ENCODE measurements at regions of chr7 and their contacts with region 1.

Region 1: GRCh38 chr7:38215735-38216670 is 38.0 kb downstream of the STARD3NL start:
- DNase-seq: peak; percentile 55 to 92 (median 78)
- ATAC-seq: peak; percentile 80
- H3K4me3 ChIP-seq: peak overlapping the region in 1 of 2 experiments; percentile 31
- H3K4me3 Mint-ChIP-seq: peak overlapping the region; percentile 19
- H3K27ac ChIP-seq: peak overlapping the region in 1 of 2 experiments; percentile 85
- H3K27ac Mint-ChIP-seq: peak overlapping the region; percentile 93
- H3K4me1 ChIP-seq: peaks cover 21% of the 10 kb centered on the region
- H3K4me1 Mint-ChIP-seq: peaks cover 47% of the 10 kb centered on the region
- H3K27me3 ChIP-seq: no peaks in the 10 kb centered on the region
- H3K27me3 Mint-ChIP-seq: no peaks in the 10 kb centered on the region
- CTCF ChIP-seq: peak; percentile 97

Region 2: GRCh38 chr7:38178004-38178694 is 37.9 kb before region 1 on chr7 and contains the start of gene STARD3NL:
- CTCF ChIA-PET with region 1: interaction called, 22 read pairs
- POLR2A ChIA-PET with region 1: no interaction called
- intact Hi-C with region 1: loop called in 1 of 2 experiments (anchors 2 kb)
- DNase-seq: peak; percentile 64 to 100 (median 87)
- ATAC-seq: peak; percentile 94
- H3K4me3 ChIP-seq: peak within 1 kb of the TSS; percentile 72 to 93
- H3K4me3 Mint-ChIP-seq: peak within 1 kb of the TSS; percentile 96
- H3K27ac ChIP-seq: peak within 1 kb of the TSS; percentile 78 to 93
- H3K27ac Mint-ChIP-seq: peak within 1 kb of the TSS; percentile 96
- H3K4me1 ChIP-seq: peaks cover 24% of the 10 kb centered on the region
- H3K4me1 Mint-ChIP-seq: peaks cover 38% of the 10 kb centered on the region
- H3K27me3 ChIP-seq: no peaks in the 10 kb centered on the region
- H3K27me3 Mint-ChIP-seq: peaks cover 11% of the 10 kb centered on the region
- CTCF ChIP-seq: no peak
- total RNA-seq, gene STARD3NL: 22.4 to 22.7 TPM

Region 3: GRCh38 chr7:38195804-38196595 is 20.0 kb before region 1 on chr7:
- CTCF ChIA-PET with region 1: interaction called, 62 read pairs
- POLR2A ChIA-PET with region 1: no interaction called
- intact Hi-C with region 1: no loop called
- DNase-seq: no peak
- ATAC-seq: no peak
- H3K4me3 ChIP-seq: no peak overlapping the region
- H3K4me3 Mint-ChIP-seq: no peak overlapping the region
- H3K27ac ChIP-seq: no peak overlapping the region
- H3K27ac Mint-ChIP-seq: no peak overlapping the region
- H3K4me1 ChIP-seq: no peaks in the 10 kb centered on the region
- H3K4me1 Mint-ChIP-seq: peaks cover 50% of the 10 kb centered on the region
- H3K27me3 ChIP-seq: no peaks in the 10 kb centered on the region
- H3K27me3 Mint-ChIP-seq: no peaks in the 10 kb centered on the region
- CTCF ChIP-seq: no peak

Region 4: GRCh38 chr7:38318803-38319416 is 102.9 kb after region 1 on chr7:
- CTCF ChIA-PET with region 1: interaction called, 76 read pairs
- POLR2A ChIA-PET with region 1: interaction called, 4 read pairs
- intact Hi-C with region 1: loop called (anchors 1 kb)
- DNase-seq: peak in 2 of 9 experiments; percentile 61 to 74
- ATAC-seq: peak; percentile 30
- H3K4me3 ChIP-seq: peak overlapping the region in 1 of 2 experiments; percentile 50
- H3K4me3 Mint-ChIP-seq: peak overlapping the region; percentile 78
- H3K27ac ChIP-seq: peak overlapping the region in 1 of 2 experiments; percentile 81
- H3K27ac Mint-ChIP-seq: peak overlapping the region; percentile 91
- H3K4me1 ChIP-seq: peaks cover 37% of the 10 kb centered on the region
- H3K4me1 Mint-ChIP-seq: peaks cover 57% of the 10 kb centered on the region
- H3K27me3 ChIP-seq: no peaks in the 10 kb centered on the region
- H3K27me3 Mint-ChIP-seq: no peaks in the 10 kb centered on the region
- CTCF ChIP-seq: peak; percentile 39

Region 5: GRCh38 chr7:38335492-38336147 is 119.6 kb after region 1 on chr7:
- CTCF ChIA-PET with region 1: interaction called, 131 read pairs
- POLR2A ChIA-PET with region 1: interaction called, 22 read pairs
- intact Hi-C with region 1: loop called (anchors 1 kb)
- DNase-seq: peak; percentile 62 to 92 (median 81)
- ATAC-seq: peak; percentile 78
- H3K4me3 ChIP-seq: peak overlapping the region; percentile 14 to 52
- H3K4me3 Mint-ChIP-seq: peak overlapping the region; percentile 80
- H3K27ac ChIP-seq: peak overlapping the region; percentile 20 to 70
- H3K27ac Mint-ChIP-seq: peak overlapping the region; percentile 89
- H3K4me1 ChIP-seq: peaks cover 26% of the 10 kb centered on the region
- H3K4me1 Mint-ChIP-seq: peaks cover 50% of the 10 kb centered on the region
- H3K27me3 ChIP-seq: no peaks in the 10 kb centered on the region
- H3K27me3 Mint-ChIP-seq: no peaks in the 10 kb centered on the region
- CTCF ChIP-seq: peak; percentile 82

Region 6: DNA sequence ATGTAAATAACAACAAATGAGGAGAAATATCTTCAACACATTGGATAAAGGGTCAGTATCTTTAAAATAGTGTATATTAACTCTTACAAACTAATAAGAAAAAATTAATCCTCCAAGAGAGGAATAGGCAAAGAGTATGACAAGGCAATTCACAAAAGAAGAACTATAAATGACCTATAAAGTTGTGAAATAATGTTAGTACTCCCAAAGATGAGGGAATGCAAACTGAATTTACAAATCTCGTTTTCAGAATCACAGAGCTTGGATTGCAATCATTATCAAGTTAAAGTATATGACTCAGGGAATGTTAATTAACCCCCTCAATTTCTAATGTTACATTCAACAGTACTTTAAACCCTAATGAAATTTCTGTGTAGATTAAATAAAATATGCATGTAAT is 144.8 kb after region 1 on chr7:
- CTCF ChIA-PET with region 1: interaction called, 338 read pairs
- POLR2A ChIA-PET with region 1: interaction called, 4 read pairs
- intact Hi-C with region 1: loop called in 1 of 2 experiments (anchors 1 kb)
- DNase-seq: no peak
- ATAC-seq: no peak
- H3K4me3 ChIP-seq: peak overlapping the region; percentile 63 to 65
- H3K4me3 Mint-ChIP-seq: peak overlapping the region; percentile 91
- H3K27ac ChIP-seq: peak overlapping the region in 1 of 2 experiments; percentile 14
- H3K27ac Mint-ChIP-seq: peak overlapping the region; percentile 94
- H3K4me1 ChIP-seq: peaks cover 19% of the 10 kb centered on the region
- H3K4me1 Mint-ChIP-seq: peaks cover 72% of the 10 kb centered on the region
- H3K27me3 ChIP-seq: no peaks in the 10 kb centered on the region
- H3K27me3 Mint-ChIP-seq: no peaks in the 10 kb centered on the region
- CTCF ChIP-seq: no peak

Measured in CD8-positive, alpha-beta T cell (primary cell).